ENCODE measurements at regions of chr18 and their contacts with region 1.

Region 1: DNA sequence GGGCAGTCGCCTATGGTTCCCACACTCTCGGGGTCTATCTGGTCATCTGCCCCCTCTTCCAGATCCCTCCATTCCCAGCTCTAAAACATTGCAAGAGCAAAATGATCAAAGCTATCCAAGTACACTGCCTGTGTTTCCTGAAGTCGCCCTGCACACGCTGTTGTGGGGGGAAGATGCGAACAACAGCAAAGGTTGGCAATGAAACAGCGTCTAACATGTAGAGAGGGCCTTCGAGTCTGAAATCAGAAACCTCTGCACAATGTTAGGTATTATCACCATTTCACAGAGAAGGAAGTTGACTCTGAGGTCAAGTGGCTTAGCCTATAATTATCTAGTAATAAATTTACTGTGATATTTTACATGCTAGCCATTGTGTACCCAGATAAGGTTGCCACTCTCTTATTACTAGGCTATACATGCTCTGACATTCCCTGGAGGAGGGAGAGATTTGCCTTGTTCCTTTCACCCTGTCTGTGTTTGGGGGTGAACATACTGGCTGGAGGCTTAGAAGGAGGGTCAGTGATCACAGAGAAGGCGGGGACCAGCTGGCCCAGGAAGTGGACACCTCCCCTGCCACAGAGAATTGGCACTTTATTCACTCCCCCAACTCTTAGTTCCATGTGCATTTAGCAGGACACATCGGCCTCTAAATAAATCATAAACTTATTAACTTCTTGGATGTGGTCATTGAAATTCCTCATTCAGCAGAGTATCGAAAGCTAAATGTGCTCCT is 36.8 kb downstream of the KCTD1 start:
- DNase-seq: no peak

Region 2: DNA sequence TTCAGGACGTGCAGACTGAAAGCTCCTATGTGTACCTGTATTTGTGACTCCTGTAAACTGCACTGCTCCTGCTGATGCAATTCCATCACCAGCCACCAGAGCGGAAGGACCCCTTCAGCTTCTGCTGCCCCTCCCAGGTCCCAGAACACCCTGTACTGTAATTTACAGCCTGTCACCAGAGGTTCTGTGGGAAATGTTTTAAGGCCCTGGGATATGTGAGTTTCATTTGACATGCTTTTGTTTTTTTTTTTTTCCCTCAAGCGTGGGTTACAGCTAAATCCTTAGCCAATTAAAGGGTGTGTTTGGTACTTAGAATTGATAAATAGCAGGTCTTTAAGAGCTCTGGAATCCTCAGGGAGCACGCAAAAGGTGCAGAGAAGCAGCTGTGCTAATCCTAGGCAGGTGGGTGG is 42.6 kb before region 1 on chr18:
- intact Hi-C with region 1: loop called (anchors 10 kb)
- DNase-seq: no peak

Region 3: GRCh38 chr18:26548429-26549262 is 37.1 kb after region 1 on chr18 and contains the start of gene KCTD1:
- intact Hi-C with region 1: loop called (anchors 5 kb)
- DNase-seq: peak; percentile 91
- total RNA-seq, gene KCTD1: 10.1 TPM